ENCODE measurements at regions of chr1 and their contacts with region 1.

Region 1: DNA sequence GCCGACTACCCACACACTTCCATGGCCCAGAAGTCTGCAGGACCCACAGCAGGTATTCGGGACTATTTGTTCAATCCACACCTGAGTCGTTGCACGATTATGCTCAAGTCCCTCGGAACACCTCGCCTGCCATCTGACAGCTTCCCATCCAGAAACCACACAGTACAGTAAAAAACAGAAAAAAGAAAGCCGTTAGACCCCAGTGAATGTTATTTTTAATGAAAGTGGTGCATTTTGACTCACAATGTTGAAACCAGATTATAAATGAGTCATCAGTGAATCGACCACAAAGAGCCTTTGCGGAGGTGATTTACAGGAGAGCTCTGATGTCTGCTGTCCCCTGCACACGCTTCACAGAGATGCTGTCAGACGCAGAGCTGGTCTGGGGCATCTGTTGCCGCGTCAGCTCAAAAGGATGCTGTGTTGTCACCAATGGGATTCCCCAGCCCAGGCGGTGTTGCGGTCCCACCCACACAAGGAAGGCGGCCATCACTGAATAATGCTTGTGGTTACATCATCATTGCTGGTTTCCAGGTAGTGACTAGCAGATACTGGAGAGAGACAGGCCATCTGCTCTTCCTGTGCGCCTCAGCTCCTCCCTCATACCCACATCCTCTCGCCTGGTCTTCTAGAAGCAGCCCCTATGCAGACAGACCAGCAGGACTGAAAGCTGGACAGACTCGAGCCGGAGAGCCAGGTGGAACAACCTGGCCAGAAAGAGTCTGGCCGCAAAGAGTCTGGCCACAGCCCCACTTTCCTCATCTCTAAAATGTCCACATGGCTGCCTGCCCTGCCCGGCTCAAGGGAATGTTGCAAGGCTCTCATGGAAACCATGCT is 116.8 kb downstream of the TOMM20 start:
- DNase-seq: peak; percentile 92
- ATAC-seq: peak; percentile 95
- H3K4me3 Mint-ChIP-seq: peak overlapping the region; percentile 64
- H3K27ac Mint-ChIP-seq: peak overlapping the region; percentile 93
- H3K4me1 Mint-ChIP-seq: peaks cover 69% of the 10 kb centered on the region
- H3K27me3 Mint-ChIP-seq: no peaks in the 10 kb centered on the region

Region 2: DNA sequence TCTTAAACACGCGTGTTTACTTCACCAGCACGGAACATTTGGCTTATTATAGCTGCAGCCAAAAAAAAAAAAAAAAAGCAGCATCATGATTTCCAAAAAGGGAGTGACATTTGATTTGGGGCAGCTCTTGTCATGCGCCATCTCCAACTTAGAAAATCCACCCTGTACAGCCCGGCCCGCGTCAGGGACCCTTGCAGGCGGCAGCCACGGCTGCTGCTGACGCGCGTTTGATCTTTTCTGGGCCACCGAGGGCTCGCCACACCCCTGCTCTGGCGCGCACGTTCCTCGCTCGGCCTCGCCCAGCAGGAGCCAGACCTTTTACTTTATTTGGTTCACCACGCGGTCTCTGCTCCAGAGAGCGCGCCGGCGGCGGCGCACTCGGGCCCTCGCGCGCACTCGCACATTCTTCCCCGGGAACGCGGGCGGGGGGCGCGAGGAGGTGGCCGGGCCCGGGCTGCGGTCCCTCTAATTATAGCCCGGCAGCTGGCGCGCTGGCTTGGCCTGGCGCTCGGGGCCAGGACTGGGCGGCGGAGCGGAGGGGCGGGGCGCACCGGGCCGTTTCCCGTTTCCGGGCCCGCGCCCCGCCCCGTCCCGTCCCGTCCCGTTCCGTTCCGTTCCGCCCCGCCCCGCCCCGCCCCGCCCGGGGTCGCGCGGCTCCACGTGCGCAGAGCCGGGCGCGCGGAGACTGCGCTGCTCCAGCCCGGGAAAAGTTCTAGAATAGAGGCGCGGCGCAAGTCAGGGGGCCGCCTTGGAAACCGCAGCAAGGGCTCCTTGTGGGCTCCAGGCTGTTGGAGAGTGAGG is 412.0 kb before region 1 on chr1:
- POLR2A ChIA-PET with region 1: interaction called, 17 read pairs
- DNase-seq: peak; percentile 83
- ATAC-seq: peak; percentile 71
- H3K4me3 Mint-ChIP-seq: peak overlapping the region; percentile 88
- H3K27ac Mint-ChIP-seq: peak overlapping the region; percentile 93
- H3K4me1 Mint-ChIP-seq: peaks cover 46% of the 10 kb centered on the region
- H3K27me3 Mint-ChIP-seq: no peaks in the 10 kb centered on the region

Region 3: DNA sequence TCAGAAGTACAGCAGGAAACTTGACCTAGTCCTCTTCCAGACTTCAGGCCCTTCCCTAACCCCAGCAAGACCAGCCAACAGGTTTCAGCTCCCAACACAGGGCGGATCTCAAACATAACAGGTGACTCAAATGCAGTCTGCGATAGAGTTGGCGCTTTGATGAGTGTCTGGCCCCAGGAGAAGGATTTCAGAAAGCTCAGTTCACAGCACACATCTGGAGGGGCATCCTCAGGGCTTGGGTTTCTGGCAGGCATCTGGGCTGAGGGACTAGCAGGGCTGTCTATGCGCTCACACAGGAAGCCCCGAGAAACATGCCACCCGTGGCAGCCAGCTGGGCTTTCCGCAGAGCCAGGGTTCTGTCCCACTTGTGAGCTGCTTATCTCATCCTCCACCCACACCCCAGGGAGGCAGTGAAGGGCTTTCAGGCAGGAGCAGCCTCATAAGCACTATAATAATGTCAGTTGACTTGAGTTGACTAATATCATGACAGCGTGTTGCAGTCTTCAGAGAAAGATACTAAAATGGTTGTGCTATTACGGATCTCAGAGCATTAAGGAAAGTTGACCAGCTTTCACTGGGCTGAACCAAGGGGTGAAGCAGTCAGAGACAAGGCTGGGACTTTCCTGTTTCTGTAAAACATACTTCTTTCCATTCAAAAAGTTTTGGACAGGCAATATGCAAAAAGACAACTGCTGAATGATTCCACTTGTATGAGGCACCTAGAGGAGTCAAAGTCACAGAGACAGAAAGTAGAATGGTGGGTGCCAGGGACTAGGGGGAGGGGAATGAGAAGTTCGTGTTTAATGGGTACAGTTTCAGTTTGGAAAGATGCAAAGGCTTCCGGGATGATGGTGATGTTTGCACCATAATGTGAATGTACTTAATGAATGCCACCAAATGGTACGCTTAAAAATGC is 168.8 kb before region 1 on chr1:
- POLR2A ChIA-PET with region 1: interaction called, 15 read pairs
- DNase-seq: peak; percentile 65
- ATAC-seq: peak; percentile 64
- H3K4me3 Mint-ChIP-seq: peak overlapping the region; percentile 72
- H3K27ac Mint-ChIP-seq: peak overlapping the region; percentile 93
- H3K4me1 Mint-ChIP-seq: peaks cover 72% of the 10 kb centered on the region
- H3K27me3 Mint-ChIP-seq: no peaks in the 10 kb centered on the region

Region 4: DNA sequence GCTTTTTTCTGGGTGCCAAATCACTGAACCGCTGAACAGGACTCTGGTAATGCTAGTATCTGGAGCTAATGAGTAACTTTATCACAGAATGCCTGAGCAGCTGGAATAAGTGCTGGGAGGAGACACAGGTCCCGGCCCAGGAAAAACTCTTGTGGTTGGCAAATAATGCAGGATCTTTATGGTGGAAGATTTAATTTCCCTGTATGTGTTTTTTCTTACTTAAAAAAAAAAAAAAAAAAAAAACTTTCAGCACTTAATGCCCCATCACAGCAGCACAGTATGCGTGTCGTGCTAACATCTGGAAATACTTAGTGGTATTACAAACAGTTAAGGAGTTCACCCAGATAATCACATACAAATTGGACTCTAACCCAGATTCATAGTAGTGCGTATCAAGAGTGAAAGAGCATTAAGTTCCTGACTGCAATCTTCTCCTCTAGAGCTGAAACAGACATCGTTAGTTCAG is 103.8 kb before region 1 on chr1:
- POLR2A ChIA-PET with region 1: no interaction called
- DNase-seq: no peak
- ATAC-seq: no peak
- H3K4me3 Mint-ChIP-seq: no peak overlapping the region
- H3K27ac Mint-ChIP-seq: no peak overlapping the region
- H3K4me1 Mint-ChIP-seq: peaks cover 21% of the 10 kb centered on the region
- H3K27me3 Mint-ChIP-seq: no peaks in the 10 kb centered on the region

Region 5: DNA sequence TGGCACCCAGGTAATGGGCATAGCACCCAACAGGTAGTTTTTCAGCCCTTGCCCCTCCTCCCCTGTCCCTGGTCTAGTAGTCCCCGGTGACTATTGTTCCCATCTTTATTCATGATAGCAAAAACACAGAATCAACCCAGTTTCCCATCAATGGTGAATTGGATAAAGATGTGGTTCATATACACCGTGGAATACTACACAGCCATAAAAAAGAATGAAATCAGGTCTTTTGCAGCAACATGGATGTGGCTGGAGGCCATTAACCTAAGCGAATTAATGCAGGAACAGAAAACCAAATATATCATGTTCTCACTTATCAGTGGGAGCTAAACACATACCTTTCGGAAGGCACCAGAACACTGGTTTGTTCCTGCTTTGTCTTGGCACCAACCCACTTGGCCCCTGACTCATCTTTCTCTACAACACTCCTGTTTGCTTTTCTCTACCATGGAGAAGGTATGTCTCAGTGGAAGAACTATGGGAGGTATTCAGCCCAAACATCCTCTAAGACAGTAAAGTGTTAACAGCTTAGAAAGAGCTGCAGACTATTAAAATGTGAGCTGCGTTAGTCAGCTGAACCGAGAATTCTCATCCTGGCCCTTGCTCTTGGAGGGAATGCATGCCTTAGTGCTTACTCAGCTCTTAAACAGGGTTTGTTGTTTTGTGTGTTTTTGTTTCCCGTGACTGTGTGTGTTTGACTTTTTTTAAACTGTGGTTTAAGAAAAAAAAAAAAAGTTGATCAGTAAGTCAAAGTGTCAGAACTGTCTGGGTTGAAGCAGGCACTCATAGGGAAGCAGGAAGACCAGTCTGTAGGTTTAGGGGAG is 86.2 kb before region 1 on chr1:
- POLR2A ChIA-PET with region 1: interaction called, 12 read pairs
- DNase-seq: no peak
- ATAC-seq: no peak
- H3K4me3 Mint-ChIP-seq: peak overlapping the region; percentile 68
- H3K27ac Mint-ChIP-seq: peak overlapping the region; percentile 95
- H3K4me1 Mint-ChIP-seq: peaks cover 47% of the 10 kb centered on the region
- H3K27me3 Mint-ChIP-seq: no peaks in the 10 kb centered on the region

Region 6: GRCh38 chr1:234963180-234963903 is 48.5 kb before region 1 on chr1:
- POLR2A ChIA-PET with region 1: interaction called, 18 read pairs
- DNase-seq: peak; percentile 86
- ATAC-seq: peak; percentile 77
- H3K4me3 Mint-ChIP-seq: peak overlapping the region; percentile 71
- H3K27ac Mint-ChIP-seq: peak overlapping the region; percentile 88
- H3K4me1 Mint-ChIP-seq: peaks cover 59% of the 10 kb centered on the region
- H3K27me3 Mint-ChIP-seq: no peaks in the 10 kb centered on the region

Region 7: DNA sequence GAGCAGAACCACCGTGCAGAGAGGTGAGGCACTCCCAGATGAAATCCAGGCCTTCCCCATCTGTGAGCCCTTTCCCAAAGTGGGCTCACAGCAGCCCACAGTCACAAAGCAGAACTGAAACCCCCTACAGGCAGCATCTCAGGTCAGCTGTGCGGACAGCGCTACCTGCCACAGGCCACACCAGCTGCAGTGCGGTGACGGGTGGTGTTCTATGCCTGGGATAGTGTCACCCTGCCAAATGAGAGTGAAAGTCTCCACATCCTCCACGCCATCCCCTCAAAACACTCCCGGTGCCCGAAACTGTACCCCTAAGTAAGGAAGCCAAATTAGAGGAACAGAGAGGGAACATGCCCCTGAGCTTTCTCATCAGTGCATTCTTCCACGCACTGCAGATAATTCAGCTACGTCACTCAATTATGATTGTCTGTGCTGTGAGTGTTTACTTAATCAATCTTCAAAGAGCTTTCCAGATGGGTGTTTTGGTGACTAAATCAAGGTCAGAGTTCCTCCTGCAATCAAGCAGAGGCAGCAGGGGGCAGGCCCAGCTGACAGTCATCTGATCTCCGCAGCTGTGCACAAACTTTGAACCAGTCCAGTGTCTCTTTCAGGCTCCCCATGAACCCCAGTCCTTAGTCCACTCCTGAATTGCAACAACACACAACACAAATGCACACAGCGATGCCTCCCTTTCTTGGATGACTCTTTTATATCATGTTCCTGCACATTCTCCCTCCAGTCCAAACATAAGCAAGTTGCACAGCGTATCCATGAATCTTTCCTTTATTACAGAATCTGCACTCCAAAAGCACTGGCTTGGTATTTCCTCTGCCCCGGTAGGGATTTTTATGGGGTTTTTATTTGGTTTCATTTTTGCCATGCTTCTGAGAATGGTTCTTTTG is 33.2 kb before region 1 on chr1:
- POLR2A ChIA-PET with region 1: interaction called, 25 read pairs
- DNase-seq: no peak
- ATAC-seq: peak; percentile 27
- H3K4me3 Mint-ChIP-seq: peak overlapping the region; percentile 74
- H3K27ac Mint-ChIP-seq: peak overlapping the region; percentile 87
- H3K4me1 Mint-ChIP-seq: peaks cover 56% of the 10 kb centered on the region
- H3K27me3 Mint-ChIP-seq: no peaks in the 10 kb centered on the region

Region 8: DNA sequence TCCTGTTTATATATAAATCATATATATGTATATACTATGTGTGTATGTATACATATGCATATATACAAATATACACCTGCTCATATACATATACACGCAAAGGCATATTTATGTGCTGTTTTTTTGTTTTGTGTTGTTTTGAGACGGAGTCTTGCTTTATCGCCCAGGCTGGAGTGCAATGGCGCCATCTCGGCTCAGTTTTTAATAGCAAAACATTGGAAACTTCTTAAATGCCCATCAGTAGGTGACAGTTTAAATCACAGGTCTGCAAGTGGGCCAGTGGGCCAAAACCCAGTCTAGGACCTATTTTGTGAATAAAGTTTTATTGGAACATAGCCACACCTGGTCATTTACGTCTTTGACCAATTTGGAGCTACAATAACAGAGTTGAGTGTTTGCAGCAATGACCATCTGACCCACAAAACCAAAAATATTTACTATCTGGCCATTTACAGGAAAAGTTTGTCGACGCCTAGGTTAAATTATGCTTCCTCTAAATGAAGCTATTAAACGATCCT is 15.5 kb before region 1 on chr1:
- POLR2A ChIA-PET with region 1: no interaction called
- DNase-seq: no peak
- ATAC-seq: no peak
- H3K4me3 Mint-ChIP-seq: no peak overlapping the region
- H3K27ac Mint-ChIP-seq: no peak overlapping the region
- H3K4me1 Mint-ChIP-seq: peaks cover 5% of the 10 kb centered on the region
- H3K27me3 Mint-ChIP-seq: no peaks in the 10 kb centered on the region

Measured in activated naive CD8-positive, alpha-beta T cell treated with anti-CD3 and anti-CD28 coated beads, Interleukin-2, amount 10 ng/mL, durations not matched to agents 7 days and 5 days (primary cell).